Head of caudate nucleus (tissue), 42 donors: ENCODE measurements at regions of chr19 and their contacts with region 1.

Region 1: GRCh38 chr19:4267101-4267900 is 11.8 kb upstream of the SHD start:
- DNase-seq: peak in 41 of 42 donors; percentile 14 to 77 (median 51)

Region 2: GRCh38 chr19:4352701-4353121 is 85.4 kb after region 1 on chr19:
- intact Hi-C with region 1: loop called (anchors 5 kb)
- DNase-seq: peak in 23 of 42 donors; percentile 41 to 82 (median 60)